ENCODE measurements at regions of chr12 and their contacts with region 1.

Region 1: GRCh38 chr12:51744235-51744634 is 104.3 kb downstream of the FIGNL2 start:
- DNase-seq: no peak
- H3K4me3 ChIP-seq: no peak overlapping the region
- H3K27ac ChIP-seq: no peak overlapping the region
- H3K4me1 ChIP-seq: no peaks in the 10 kb centered on the region
- H3K27me3 ChIP-seq: no peaks in the 10 kb centered on the region
- CTCF ChIP-seq: no peak

Region 2: DNA sequence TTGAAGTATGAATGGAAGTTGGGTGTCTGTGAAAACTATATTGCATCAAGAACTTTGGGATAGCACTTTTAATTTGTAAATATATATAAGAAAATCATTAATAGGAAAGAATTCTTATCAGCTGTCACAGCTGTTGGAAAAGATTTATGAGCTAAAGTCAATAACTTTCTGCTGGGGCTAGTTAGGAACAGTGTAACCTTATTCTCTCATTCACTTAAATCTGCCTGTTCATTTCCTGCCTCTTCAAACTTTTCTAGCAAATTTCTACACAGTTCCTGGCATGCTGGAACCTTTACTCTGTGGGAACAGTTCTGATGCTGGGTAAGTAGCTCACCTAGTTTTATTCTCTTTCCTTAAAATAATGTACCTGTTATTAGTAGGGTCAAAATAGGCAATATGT is 43.3 kb before region 1 on chr12:
- intact Hi-C with region 1: loop called (anchors 2 kb)
- DNase-seq: no peak
- H3K4me3 ChIP-seq: no peak overlapping the region
- H3K27ac ChIP-seq: no peak overlapping the region
- H3K4me1 ChIP-seq: no peaks in the 10 kb centered on the region
- H3K27me3 ChIP-seq: no peaks in the 10 kb centered on the region
- CTCF ChIP-seq: no peak

Region 3: DNA sequence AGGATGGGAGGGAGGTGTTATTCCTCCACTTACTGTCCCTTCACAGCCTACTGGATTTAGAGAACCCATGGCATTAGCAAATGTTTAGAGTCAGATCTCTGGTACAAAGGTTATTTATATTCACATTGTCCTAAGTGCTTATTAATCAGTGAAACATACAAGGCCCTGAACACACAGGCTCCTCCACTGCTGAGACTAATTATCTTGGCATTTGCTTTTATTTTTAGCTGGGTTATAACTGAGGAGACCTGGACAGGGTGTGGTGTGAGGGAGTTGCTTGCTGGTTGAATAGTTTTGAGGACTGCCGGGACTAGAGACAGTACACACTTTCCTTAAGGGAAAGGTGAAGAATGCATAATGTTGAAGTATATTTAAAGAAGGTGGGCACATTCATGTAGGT is 26.8 kb after region 1 on chr12:
- intact Hi-C with region 1: no loop called
- DNase-seq: no peak
- H3K4me3 ChIP-seq: no peak overlapping the region
- H3K27ac ChIP-seq: no peak overlapping the region
- H3K4me1 ChIP-seq: no peaks in the 10 kb centered on the region
- H3K27me3 ChIP-seq: no peaks in the 10 kb centered on the region
- CTCF ChIP-seq: no peak